ENCODE measurements at regions of chr20 and their contacts with region 1.

Region 1: DNA sequence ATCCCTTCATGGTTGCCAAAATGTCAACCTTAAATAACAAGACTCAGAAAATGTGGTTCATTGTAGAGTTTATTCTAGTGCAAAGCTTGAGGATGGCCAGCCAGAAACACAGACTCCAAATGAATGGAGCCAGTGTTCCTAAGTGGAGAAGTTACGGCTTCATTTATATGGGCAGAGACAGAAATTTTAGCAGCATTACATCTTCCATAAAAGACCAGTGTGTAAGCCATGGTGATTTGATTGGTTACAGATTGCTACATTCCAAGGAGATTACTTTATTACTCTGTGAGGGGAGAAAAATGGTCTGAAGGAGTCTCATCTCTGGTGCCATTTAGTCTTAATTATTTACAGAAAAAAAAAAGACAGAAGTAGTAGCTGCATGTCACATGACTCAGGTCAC is 97.8 kb downstream of the OTOR start:
- DNase-seq: peak; percentile 26
- H3K4me3 ChIP-seq: no peak overlapping the region
- CTCF ChIP-seq: no peak

Region 2: DNA sequence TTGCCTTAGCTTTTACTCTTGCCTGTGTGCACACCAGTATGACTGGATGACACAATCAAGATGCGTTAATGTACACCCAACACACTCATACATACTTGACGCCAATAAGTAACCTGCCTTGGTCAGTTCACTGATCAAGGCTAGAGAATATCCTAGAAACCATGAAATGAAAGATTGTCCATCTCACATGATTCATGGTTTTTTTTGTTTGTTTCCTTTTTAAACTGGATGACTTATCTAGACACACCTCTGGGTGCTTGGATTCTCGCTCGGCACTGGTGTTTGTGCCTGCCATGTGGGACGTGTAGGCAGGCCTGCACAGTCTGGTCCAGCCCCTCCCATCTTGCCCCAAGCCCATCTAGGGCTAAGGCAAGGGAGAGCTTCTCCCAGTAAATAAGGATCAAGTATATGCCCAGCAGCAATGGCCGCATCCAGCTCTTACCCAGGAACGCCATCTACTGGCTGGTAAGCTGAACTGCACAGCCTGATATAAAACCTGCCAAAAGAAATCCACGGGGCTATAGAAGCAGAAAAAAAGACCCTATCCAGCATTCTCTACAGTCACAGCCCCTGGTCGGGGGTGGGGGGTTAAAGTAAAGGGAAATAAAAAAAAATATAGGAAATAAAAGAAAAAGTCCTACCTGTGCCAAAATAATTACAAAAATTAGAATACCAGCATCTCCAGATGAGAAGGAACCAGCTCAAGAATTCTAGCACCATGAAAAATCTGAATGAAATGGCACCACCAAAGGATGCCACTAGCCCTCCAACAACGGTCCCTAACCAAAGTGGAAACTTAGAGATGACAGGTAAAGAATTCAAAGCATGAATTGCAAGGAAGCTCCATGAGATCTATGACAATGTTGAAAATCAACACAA is 24.6 kb before region 1 on chr20:
- CTCF ChIA-PET with region 1: interaction called, 18 read pairs
- POLR2A ChIA-PET with region 1: no interaction called
- DNase-seq: no peak
- H3K4me3 ChIP-seq: no peak overlapping the region
- CTCF ChIP-seq: peak; percentile 79

Measured in AG04449 (cell line).